HEK293 (cell line): ENCODE measurements at regions of chr1 and their contacts with region 1.

Region 1: GRCh38 chr1:45934947-45935346 is 131.5 kb downstream of the MAST2 start:
- H3K4me3 ChIP-seq: no peak overlapping the region
- H3K27ac ChIP-seq: no peak overlapping the region
- H3K4me1 ChIP-seq: no peaks in the 10 kb centered on the region
- CTCF ChIP-seq: no peak

Region 2: GRCh38 chr1:45767035-45767434 is 167.9 kb before region 1 on chr1:
- CTCF ChIA-PET with region 1: no interaction called
- POLR2A ChIA-PET with region 1: no interaction called
- H3K4me3 ChIP-seq: no peak overlapping the region
- H3K27ac ChIP-seq: no peak overlapping the region
- H3K4me1 ChIP-seq: no peaks in the 10 kb centered on the region
- CTCF ChIP-seq: no peak

Region 3: DNA sequence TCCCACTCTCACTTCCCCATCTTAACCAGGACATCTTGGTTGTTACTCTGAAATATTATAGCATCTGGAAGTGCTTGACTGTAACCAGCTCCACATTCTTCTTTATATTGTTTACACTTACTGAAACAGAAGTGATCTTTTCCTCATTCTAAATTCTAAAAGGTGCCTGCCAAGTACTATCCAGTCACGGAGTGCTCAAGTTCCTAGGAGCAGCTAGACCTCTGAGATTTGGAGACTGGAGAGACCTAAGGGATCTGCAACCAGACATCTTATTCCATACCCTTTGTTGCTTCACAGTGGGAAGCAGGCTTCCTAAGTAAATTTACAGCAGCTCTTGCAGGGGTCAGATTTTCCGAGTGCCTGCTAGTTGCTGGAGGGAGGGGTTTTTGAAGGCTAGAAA is 19.0 kb after region 1 on chr1:
- CTCF ChIA-PET with region 1: no interaction called
- POLR2A ChIA-PET with region 1: interaction called, 13 read pairs
- H3K4me3 ChIP-seq: no peak overlapping the region
- H3K27ac ChIP-seq: no peak overlapping the region
- H3K4me1 ChIP-seq: peaks cover 7% of the 10 kb centered on the region; the same call in 1 of the 2 replicates
- CTCF ChIP-seq: no peak